Right ventricle myocardium inferior (tissue), 1 donor: ENCODE measurements at regions of chr7 and their contacts with region 1.

Region 1: GRCh38 chr7:107332488-107333269 is 137.2 kb upstream of the GPR22 start:
- DNase-seq: no peak
- ATAC-seq: no peak

Region 2: GRCh38 chr7:107364787-107365186 is 32.1 kb after region 1 on chr7:
- intact Hi-C with region 1: loop called (anchors 1 kb)
- DNase-seq: no peak
- ATAC-seq: no peak

Region 3: DNA sequence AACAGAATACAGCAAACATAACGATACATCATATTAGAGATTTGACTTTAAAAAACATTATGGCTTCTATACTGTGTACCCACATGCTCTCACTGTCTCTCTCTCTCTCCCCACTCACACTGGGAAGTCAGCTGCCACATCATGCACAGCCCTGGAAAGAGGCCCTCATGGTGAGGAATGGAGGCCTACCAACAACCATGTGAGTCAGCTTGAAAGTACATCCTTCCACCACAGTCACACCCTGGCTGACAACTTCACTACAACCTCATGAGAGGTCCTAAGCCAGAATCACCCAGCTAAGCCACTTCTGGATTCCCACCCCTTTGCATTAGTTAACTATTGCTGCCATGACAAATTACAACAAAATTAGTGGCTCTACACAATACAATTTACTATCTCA is 113.9 kb after region 1 on chr7:
- intact Hi-C with region 1: no loop called
- DNase-seq: no peak
- ATAC-seq: no peak